ENCODE measurements at regions of chr10 and their contacts with region 1.

Region 1: GRCh38 chr10:14325325-14325955 is 5.3 kb downstream of the FRMD4A start:
- DNase-seq: peak in 1 of 5 donors; percentile 38
- ATAC-seq: no peak
- H3K4me3 ChIP-seq: no peak overlapping the region
- H3K27ac ChIP-seq: no peak overlapping the region
- H3K4me1 ChIP-seq: no peaks in the 10 kb centered on the region
- H3K27me3 ChIP-seq: peaks cover 0 to 37% (median 1%) of the 10 kb centered on the region in 9 donors
- CTCF ChIP-seq: peak in 11 of 12 donors; percentile 12 to 51 (median 43)
- POLR2A ChIP-seq: no peak

Region 2: DNA sequence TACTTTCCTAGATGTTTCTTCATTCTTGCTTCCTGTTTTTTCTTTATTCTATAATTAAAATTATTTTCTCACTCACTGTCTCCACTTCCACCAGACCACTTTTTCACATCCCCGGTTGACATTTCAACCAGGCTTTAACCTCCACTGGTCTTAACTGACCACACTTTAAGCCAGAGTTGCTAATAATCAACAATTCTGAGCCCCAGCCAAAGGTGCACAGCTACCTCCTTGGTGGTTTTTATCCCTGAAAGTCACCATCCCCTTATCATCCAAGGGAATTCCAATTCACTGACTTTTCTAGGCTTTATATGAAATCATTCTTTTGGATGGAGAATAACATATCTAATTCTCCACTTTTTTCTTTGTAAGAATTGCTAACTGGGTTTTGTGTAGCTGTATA is 133.6 kb before region 1 on chr10:
- intact Hi-C with region 1: loop called in 1 of 10 experiments (anchors 10 kb)
- DNase-seq: no peak
- ATAC-seq: no peak
- H3K4me3 ChIP-seq: no peak overlapping the region
- H3K27ac ChIP-seq: no peak overlapping the region
- H3K4me1 ChIP-seq: no peaks in the 10 kb centered on the region
- H3K27me3 ChIP-seq: peaks cover 0 to 23% (median 3%) of the 10 kb centered on the region in 9 donors
- CTCF ChIP-seq: no peak
- POLR2A ChIP-seq: no peak